ENCODE measurements at regions of chr6 and their contacts with region 1.

Region 1: GRCh38 chr6:135323202-135323668 is 142.1 kb downstream of the MYB start:
- DNase-seq: no peak
- ATAC-seq: no peak
- H3K4me3 Mint-ChIP-seq: no peak overlapping the region
- H3K27ac Mint-ChIP-seq: no peak overlapping the region
- H3K4me1 Mint-ChIP-seq: peaks cover 12% of the 10 kb centered on the region
- H3K27me3 Mint-ChIP-seq: no peaks in the 10 kb centered on the region

Region 2: GRCh38 chr6:135403584-135403983 is 80.3 kb after region 1 on chr6:
- CTCF ChIA-PET with region 1: no interaction called
- POLR2A ChIA-PET with region 1: interaction called, 13 read pairs
- intact Hi-C with region 1: no loop called
- DNase-seq: no peak
- ATAC-seq: no peak
- H3K4me3 Mint-ChIP-seq: no peak overlapping the region
- H3K27ac Mint-ChIP-seq: no peak overlapping the region
- H3K4me1 Mint-ChIP-seq: no peaks in the 10 kb centered on the region
- H3K27me3 Mint-ChIP-seq: no peaks in the 10 kb centered on the region